ENCODE measurements at regions of chr12 and their contacts with region 1.

Region 1: DNA sequence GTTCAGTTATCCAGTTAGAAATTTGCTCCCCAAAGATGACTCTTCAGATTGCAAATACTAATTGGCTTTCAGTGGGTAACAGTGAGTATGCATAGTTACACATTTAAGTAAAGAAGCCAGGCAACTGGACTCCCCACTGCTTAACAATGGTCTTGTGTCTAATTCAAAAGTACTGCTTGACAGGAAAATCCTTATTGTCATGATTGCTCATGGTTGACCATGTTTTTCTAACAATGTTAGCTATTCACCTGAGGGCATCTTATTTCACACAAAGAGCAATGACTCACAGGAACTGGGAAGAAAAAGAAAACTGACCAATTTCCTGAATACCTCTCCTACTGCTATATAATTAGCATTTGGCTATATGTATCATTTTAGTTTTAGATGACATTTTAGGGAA is 33.7 kb upstream of the ALG10B start:
- DNase-seq: no peak
- ATAC-seq: no peak
- H3K4me3 ChIP-seq: no peak overlapping the region
- H3K27ac ChIP-seq: no peak overlapping the region
- H3K4me1 ChIP-seq: no peaks in the 10 kb centered on the region
- H3K27me3 ChIP-seq: peaks cover 0 to 5% (median 0%) of the 10 kb centered on the region in 9 donors
- CTCF ChIP-seq: no peak
- POLR2A ChIP-seq: no peak

Region 2: GRCh38 chr12:38175538-38175937 is 107.3 kb before region 1 on chr12:
- intact Hi-C with region 1: loop called in 1 of 10 experiments (anchors 10 kb)
- DNase-seq: no peak
- ATAC-seq: no peak
- H3K4me3 ChIP-seq: no peak overlapping the region
- H3K27ac ChIP-seq: no peak overlapping the region
- H3K4me1 ChIP-seq: no peaks in the 10 kb centered on the region
- H3K27me3 ChIP-seq: no peaks in the 10 kb centered on the region
- CTCF ChIP-seq: no peak
- POLR2A ChIP-seq: no peak

Measured in heart left ventricle (tissue), 16 donors.